Posterior vena cava (tissue), 2 donors: ENCODE measurements at regions of chr7 and their contacts with region 1.

Region 1: DNA sequence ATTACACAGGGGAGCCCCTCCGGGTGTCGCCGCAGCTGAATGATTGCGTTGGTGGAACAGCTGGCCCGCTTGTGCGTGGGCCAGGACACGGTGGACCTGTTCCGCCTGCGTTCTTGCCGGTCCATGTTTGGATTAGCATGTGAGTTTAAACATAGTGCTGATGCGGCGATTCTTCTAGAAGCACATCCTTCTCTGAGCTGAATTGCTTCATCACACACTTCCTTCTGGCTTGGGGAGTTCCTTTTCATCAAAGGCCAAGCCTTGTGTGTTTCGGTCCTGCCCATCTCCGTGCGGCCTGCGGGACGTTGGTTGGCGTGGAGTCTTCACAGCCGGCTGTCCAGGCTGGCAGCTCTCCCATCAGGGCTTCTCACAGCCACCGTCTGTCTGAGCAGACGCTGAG is 45.5 kb upstream of the SLC29A4 start:
- DNase-seq: peak; percentile 89

Region 2: GRCh38 chr7:5266191-5267028 is 29.1 kb after region 1 on chr7:
- intact Hi-C with region 1: loop called in 1 of 2 experiments (anchors 1 kb)
- DNase-seq: no peak

Region 3: GRCh38 chr7:5450549-5451372 is 213.5 kb after region 1 on chr7:
- intact Hi-C with region 1: loop called in 1 of 2 experiments (anchors 5 kb)
- DNase-seq: no peak